ENCODE measurements at regions of chr4 and their contacts with region 1.

Region 1: DNA sequence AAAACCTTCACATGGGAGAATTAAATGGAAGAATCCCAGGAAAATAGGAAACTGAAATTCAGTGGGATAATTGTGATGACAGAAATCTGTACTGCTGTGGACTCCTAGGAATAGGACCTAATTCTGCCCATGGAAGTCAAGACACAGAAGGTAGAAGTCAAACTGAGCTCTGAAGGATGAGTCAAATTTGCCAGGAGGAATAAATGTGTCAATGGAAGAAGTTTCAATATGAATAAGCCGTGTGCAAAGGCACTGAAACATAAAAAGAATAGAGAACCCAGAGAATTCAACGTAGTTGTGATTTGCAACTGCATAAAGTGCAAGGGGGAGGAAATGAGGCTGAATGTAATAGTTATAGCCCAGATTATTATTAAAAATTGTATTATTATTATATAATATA is 11.6 kb downstream of the ENAM start:
- H3K4me3 ChIP-seq: no peak overlapping the region
- H3K27ac ChIP-seq: no peak overlapping the region
- H3K4me1 ChIP-seq: no peaks in the 10 kb centered on the region
- CTCF ChIP-seq: no peak

Region 2: GRCh38 chr4:70488748-70489147 is 151.4 kb before region 1 on chr4:
- CTCF ChIA-PET with region 1: no interaction called
- POLR2A ChIA-PET with region 1: no interaction called
- H3K4me3 ChIP-seq: no peak overlapping the region
- H3K27ac ChIP-seq: no peak overlapping the region
- H3K4me1 ChIP-seq: no peaks in the 10 kb centered on the region
- CTCF ChIP-seq: no peak

Region 3: DNA sequence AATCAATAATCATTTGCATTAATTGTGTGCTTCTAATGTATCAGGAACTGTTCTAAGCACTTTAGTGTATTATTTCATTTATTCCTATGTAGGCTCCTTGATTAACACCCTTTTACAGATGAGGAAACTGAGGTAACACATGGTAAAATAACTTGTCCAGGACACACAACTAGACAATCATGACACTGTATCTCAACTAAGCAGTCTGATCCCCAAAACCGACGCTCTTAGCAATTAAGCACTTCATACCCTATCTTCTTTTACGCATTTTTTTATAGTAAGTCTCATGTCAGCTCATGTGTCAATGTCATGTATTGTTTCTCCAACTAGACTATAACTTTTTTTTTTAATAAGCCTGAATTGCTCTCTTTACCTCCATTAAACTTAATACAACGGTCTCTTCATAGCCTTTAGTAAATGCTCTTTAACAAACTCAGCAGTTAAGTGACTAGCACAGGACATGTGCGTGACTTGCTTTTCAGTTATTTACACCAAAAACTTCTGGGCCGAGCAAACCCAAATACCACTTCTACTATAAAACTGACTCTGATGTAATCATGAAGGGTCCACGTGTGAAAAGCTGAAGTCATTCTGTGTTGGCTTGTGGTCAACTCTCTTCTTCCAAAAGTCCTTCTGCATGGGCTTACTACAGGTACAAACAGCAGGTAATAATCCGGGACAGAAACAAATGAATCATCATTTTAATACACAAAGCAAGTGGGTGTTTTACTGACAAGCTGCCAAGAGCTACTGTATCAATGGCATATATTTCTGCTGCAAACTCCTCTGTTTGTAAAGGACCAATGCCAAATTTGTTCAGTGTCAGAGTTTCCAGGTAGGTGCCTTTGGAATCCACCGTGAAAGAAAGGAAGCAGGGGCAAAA is 56.0 kb before region 1 on chr4:
- CTCF ChIA-PET with region 1: no interaction called
- POLR2A ChIA-PET with region 1: no interaction called
- H3K4me3 ChIP-seq: no peak overlapping the region
- H3K27ac ChIP-seq: no peak overlapping the region
- H3K4me1 ChIP-seq: no peaks in the 10 kb centered on the region
- CTCF ChIP-seq: no peak

Region 4: DNA sequence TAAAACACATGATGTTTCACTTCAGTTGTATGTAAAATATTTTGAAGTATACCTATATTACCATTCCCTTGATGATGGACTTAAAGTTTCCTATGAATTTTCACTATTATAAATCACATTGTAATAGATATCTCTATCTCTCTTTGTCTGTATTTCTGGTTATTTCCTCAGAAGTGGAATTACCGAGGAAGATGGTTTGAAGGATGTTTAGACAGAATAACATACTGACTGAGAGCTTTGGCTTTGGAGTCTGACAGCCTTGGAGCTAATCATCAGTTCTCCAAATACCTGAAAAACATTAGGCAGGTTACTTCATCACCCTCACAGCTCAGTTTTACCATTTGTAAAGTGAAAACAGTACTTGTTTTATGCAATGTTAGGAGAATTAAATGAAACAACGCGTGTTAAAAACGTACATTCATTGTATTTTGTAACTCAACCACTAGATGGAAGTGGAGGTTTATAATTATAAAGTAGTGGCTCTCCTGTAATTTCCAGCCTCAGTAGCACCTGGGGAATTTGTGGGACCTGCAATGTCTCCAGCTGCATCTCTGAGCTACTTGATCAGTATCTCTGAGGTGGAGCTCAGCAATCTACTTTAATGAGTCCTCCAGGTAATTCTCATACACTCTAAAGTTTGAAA is 11.8 kb after region 1 on chr4:
- CTCF ChIA-PET with region 1: interaction called, 11 read pairs
- POLR2A ChIA-PET with region 1: no interaction called
- H3K4me3 ChIP-seq: no peak overlapping the region
- H3K27ac ChIP-seq: no peak overlapping the region
- H3K4me1 ChIP-seq: no peaks in the 10 kb centered on the region
- CTCF ChIP-seq: no peak

Measured in HEK293 (cell line).